ENCODE measurements at regions of chr12 and their contacts with region 1.

Region 1: DNA sequence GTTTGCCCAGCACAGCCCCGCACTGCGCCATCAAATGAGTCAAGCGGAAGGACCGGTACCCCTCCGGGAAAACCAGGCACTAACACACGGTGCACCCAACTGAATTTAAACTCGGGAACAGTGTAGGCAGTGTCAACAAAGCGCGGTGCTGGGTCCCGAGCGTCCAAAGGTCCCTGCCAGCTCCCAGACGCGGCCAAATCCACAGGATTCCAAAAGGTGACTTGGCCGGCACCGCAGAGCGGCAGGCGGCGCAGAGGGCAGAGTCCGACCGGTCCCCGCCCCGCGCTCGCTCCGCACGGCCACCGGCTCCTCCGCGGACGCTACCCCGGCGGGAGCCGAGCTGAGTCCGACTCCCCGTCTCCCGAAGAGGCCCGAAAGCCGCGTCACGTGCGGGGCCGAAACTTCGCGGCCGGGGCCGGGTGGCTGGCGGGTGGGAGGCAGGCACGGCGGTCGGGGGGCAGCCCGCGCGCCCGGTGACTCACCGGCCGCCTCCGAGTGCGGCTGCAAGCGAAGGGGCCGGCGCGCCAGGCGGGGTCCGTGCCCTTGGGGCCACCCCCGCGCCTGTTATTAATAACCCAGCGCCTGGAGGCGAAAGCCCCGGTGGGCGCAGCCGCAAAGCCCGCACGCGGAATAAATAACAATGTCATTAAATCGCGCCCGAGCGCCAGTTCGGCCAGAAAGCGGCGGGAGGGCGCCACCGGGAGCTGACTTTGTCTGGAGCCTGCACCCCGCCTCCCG is 863 bp downstream of the DENND5B start:
- DNase-seq: peak; percentile 75
- ATAC-seq: peak; percentile 70
- H3K4me3 Mint-ChIP-seq: peak overlapping the region; percentile 96
- H3K27ac Mint-ChIP-seq: peak overlapping the region; percentile 94
- H3K4me1 Mint-ChIP-seq: peaks cover 60% of the 10 kb centered on the region
- H3K27me3 Mint-ChIP-seq: no peaks in the 10 kb centered on the region
- CTCF ChIP-seq: no peak

Region 2: GRCh38 chr12:31524791-31525495 is 65.1 kb before region 1 on chr12:
- CTCF ChIA-PET with region 1: no interaction called
- POLR2A ChIA-PET with region 1: interaction called, 7 read pairs
- intact Hi-C with region 1: loop called (anchors 5 kb)
- DNase-seq: no peak
- ATAC-seq: peak; percentile 72
- H3K4me3 Mint-ChIP-seq: peak overlapping the region; percentile 42
- H3K27ac Mint-ChIP-seq: peak overlapping the region; percentile 7
- H3K4me1 Mint-ChIP-seq: peaks cover 61% of the 10 kb centered on the region
- H3K27me3 Mint-ChIP-seq: no peaks in the 10 kb centered on the region
- CTCF ChIP-seq: no peak

Region 3: DNA sequence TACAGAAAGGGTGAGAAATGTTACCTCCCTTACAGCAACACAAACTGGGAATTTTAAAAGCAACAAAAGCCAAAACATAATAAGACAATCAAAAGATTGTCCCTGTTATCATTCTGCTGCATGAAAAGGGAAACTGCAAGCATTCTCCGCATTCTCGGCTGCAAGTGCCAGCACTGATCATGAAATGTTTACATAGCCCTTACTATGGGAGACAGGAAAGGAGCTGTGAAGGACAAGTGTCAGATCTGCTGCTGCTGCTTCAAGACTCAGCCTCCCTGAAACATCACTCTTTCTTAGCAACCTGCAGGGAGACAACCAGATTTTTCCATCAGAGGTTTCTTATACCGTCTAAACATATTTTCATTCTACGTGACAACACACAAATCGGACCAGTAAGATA is 19.2 kb before region 1 on chr12:
- CTCF ChIA-PET with region 1: no interaction called
- POLR2A ChIA-PET with region 1: interaction called, 5 read pairs
- intact Hi-C with region 1: loop called (anchors 2 kb)
- DNase-seq: no peak
- ATAC-seq: no peak
- H3K4me3 Mint-ChIP-seq: no peak overlapping the region
- H3K27ac Mint-ChIP-seq: peak overlapping the region; percentile 27
- H3K4me1 Mint-ChIP-seq: peaks cover 71% of the 10 kb centered on the region
- H3K27me3 Mint-ChIP-seq: no peaks in the 10 kb centered on the region
- CTCF ChIP-seq: no peak

Region 4: DNA sequence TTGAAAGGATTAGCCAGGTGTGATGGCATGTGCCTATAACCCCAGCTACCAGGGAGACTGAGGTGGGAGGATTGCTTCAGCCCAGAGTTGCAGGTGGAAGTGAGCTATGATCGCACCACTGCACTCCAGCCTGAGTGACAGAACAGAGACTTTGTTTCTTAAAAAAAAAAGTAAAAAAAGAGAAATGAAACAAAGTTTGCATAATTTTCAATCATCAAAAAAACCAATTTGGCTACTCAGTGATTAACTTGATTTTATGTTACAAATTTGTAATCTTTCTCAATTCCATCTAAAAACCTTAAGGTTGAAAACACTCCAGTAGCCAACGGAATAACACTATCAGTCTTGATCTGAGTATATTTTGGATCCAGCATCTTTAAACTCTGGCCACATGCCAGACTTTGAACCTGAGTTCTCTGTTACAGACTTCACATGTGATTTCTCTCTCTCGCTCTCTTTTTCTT is 13.5 kb after region 1 on chr12:
- CTCF ChIA-PET with region 1: interaction called, 3 read pairs
- POLR2A ChIA-PET with region 1: interaction called, 116 read pairs
- intact Hi-C with region 1: loop called (anchors 1 kb)
- DNase-seq: peak; percentile 34
- ATAC-seq: peak; percentile 87
- H3K4me3 Mint-ChIP-seq: peak overlapping the region; percentile 61
- H3K27ac Mint-ChIP-seq: peak overlapping the region; percentile 92
- H3K4me1 Mint-ChIP-seq: peaks cover 59% of the 10 kb centered on the region
- H3K27me3 Mint-ChIP-seq: no peaks in the 10 kb centered on the region
- CTCF ChIP-seq: no peak

Region 5: DNA sequence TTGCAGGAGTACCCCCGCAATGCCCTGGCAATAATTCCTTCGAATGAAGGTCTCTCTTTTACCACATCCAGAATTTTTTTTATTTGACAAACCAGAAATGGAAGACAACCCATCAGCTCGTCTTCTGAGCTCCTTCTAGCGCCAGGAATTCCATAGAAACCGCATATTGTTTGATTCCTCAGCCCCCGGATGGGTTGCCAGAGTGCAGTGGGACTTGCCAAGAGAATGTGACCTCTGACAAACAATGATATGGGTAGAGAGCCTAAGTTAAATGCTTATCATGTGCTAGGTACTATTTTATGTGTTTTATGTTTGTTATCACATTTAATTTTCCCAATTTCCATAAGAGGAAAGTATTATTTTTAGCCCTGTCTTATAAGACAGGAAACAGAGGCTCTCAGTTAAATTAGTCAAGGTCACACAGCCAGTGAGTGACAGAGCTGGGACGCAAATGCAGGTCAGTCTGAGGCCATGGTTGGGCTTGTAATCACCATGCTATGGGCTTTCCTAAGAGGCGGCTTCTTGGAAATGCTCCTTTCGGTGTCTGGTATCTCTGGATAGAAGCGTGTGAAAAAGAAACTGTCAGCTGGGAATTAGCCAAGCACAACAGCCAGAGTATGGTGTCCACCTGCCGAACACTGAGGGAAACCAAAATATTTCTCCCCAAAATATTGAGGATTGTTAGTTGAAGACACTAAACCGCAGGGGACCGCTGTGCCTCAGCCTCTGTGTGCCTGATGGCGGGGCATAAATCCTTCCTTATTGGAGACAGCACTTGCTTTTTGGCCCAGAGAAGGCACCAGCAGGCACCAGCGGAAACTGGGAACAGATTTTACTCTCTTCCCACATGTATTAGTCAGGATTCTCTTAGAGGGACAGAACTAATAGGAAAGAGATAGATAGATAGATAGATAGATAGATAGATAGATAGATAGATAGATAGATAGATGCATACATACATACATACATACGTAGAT is 40.0 kb after region 1 on chr12:
- CTCF ChIA-PET with region 1: no interaction called
- POLR2A ChIA-PET with region 1: interaction called, 29 read pairs
- intact Hi-C with region 1: no loop called
- DNase-seq: no peak
- ATAC-seq: no peak
- H3K4me3 Mint-ChIP-seq: no peak overlapping the region
- H3K27ac Mint-ChIP-seq: peak overlapping the region; percentile 2
- H3K4me1 Mint-ChIP-seq: peaks cover 27% of the 10 kb centered on the region
- H3K27me3 Mint-ChIP-seq: no peaks in the 10 kb centered on the region
- CTCF ChIP-seq: no peak